ENCODE measurements at regions of chr12 and their contacts with region 1.

Region 1: DNA sequence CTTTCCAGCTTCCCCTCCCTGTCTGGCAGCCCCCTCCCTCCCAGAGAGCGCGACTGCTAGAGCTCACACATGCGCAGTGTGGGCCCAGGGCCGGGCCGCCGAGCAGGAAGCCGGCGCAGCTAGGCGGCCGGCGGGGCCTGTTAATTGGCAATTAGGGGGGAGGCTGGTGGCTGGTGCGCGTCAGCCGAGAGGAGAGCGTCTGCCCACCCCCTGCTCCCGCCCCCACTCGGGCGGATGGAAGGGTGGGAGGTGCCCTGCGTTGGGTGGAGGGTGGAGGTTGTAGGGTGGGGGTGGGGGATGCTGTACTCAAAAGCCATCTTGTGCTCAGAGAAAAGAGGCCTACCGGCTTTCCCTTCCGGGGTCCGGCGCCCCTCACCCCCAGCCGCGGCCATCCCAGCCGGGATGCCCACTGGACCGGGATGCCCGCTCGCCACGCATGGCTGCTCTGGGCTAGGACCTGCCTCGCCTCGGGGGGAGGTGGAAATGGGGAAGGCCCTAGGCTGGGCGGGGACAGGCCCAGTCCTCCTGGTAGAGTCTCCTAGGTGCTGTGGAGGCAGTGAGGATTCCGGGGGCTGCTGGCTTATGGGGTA is 9.2 kb downstream of the HOXC8 start:
- DNase-seq: peak; percentile 99
- H3K4me3 ChIP-seq: peak overlapping the region; percentile 68
- H3K27ac ChIP-seq: peak overlapping the region; percentile 97
- H3K4me1 ChIP-seq: peaks cover 59% of the 10 kb centered on the region
- H3K27me3 ChIP-seq: no peaks in the 10 kb centered on the region
- CTCF ChIP-seq: no peak

Region 2: DNA sequence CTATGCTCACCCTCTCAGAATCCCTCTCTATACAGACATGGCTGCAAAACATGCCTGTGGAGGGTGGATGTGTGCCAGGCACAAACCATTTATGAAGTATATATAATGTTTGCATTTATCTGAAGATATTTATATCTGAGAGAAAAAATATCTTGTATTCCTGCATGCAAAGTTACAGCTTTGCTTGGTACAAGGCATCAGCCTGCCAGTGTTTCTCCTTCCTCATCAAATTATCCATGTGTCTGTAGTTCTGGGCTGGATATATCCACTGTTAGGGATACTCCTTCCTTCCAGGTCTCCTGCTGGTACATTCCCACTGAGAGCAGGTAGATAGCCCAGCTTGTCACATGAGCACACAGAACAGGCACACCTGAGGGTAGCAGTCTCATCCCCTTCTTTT is 47.7 kb after region 1 on chr12:
- CTCF ChIA-PET with region 1: no interaction called
- POLR2A ChIA-PET with region 1: interaction called, 24 read pairs
- intact Hi-C with region 1: no loop called
- DNase-seq: no peak
- H3K4me3 ChIP-seq: no peak overlapping the region
- H3K27ac ChIP-seq: no peak overlapping the region
- H3K4me1 ChIP-seq: no peaks in the 10 kb centered on the region
- H3K27me3 ChIP-seq: no peaks in the 10 kb centered on the region
- CTCF ChIP-seq: no peak

Region 3: DNA sequence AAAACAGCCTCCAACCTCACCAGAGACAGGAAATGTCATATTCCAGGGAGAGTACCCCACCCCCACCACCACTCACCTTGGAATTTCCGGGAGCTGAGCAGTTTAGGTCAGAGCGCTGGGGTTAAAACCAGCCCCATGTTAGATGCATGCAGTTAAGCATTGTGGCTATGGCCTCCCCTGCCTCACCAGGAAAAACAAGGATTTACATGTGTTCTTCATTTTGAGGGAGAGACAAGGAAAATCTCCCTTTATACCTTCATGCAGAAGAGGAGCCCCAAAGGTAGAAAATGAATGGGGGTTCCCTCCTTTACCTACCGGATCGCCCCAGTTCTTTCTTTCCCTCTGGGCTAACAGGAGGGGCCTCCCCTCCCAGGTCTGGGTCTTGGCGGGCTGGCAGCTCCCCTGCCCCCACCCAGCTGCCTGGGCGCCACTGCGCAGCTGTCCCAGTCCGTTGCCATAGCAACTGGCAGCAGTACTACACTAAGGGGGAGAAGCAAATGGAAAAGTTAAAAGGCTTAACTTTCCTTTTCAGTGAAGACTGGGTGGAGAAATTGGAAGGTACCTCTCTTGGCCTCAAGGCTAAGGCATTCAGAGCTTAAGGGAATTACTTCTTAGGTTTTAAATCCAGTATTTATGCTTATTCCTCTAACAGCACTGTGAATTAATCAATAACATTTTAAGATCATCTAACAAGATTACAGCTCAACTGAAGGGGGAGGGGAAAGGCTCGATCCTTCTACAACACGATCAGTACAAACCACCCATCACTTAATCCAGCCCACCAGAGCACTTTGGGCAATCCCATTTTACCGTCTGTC is 241.4 kb after region 1 on chr12:
- CTCF ChIA-PET with region 1: no interaction called
- POLR2A ChIA-PET with region 1: no interaction called
- intact Hi-C with region 1: no loop called
- DNase-seq: peak; percentile 97
- H3K4me3 ChIP-seq: peak overlapping the region; percentile 50
- H3K27ac ChIP-seq: peak overlapping the region; percentile 87
- H3K4me1 ChIP-seq: peaks cover 59% of the 10 kb centered on the region
- H3K27me3 ChIP-seq: no peaks in the 10 kb centered on the region
- CTCF ChIP-seq: no peak

Region 4: GRCh38 chr12:54370208-54370730 is 352.3 kb after region 1 on chr12:
- CTCF ChIA-PET with region 1: no interaction called
- POLR2A ChIA-PET with region 1: no interaction called
- intact Hi-C with region 1: no loop called
- DNase-seq: peak; percentile 84
- H3K4me3 ChIP-seq: peak overlapping the region; percentile 50
- H3K27ac ChIP-seq: no peak overlapping the region
- H3K4me1 ChIP-seq: peaks cover 54% of the 10 kb centered on the region
- H3K27me3 ChIP-seq: no peaks in the 10 kb centered on the region
- CTCF ChIP-seq: peak; percentile 92

Measured in A673 (cell line).